ENCODE measurements at regions of chr18 and their contacts with region 1.

Region 1: GRCh38 chr18:46213295-46213694 is 109.1 kb downstream of the HAUS1 start:
- DNase-seq: no peak
- H3K4me3 Mint-ChIP-seq: no peak overlapping the region
- H3K27ac Mint-ChIP-seq: peak overlapping the region; percentile 46
- H3K4me1 Mint-ChIP-seq: peaks cover 70% of the 10 kb centered on the region
- H3K27me3 Mint-ChIP-seq: no peaks in the 10 kb centered on the region

Region 2: DNA sequence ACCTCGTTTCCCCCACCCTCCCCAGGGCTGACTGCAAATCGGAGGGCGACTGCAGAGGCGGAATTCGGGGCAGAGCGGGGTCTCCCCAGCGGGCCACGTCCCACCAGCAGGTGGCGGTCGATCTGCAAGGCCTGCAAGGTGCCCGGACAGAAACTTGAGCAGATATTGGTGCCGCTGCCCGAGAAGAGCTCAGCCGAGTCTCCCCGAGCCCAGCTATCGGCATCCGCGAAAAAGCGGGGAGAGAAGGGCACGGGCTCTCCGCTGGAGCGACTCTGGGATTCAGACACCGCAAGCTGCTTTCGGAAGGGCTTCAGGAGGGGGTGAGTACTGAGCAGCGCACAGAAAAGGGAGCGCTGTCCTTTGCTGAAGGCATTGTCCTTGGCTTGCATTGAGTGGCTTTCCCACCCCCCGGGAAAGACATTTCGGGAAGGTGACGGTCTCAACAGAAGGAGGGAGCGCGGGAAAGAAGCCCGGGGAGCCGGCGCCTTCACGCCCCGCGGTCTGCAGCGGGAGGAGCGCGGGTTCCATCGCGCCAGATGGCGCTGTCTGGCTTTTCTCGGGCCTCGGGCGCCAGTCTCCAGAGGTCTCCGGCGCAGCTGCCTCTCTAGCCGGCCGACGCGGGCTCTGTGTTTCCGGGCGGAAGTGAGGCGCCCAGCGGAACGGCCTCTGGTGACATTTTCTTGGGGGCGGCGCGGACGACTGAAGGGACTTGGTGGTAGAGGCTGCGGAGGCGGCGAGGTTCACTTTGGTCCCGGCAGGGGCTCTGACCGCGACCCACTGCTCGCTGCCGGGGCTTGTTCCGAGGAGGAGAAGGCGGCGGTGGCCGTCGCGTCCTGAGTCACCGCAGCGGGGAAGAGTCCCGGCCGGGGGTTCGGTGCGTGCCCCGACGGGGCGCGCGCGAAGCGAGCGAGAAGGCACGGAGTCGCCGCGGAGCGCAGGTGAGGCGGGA is 39.6 kb before region 1 on chr18:
- intact Hi-C with region 1: loop called (anchors 1 kb)
- DNase-seq: peak; percentile 90
- H3K4me3 Mint-ChIP-seq: peak overlapping the region; percentile 96
- H3K27ac Mint-ChIP-seq: peak overlapping the region; percentile 99
- H3K4me1 Mint-ChIP-seq: peaks cover 47% of the 10 kb centered on the region
- H3K27me3 Mint-ChIP-seq: no peaks in the 10 kb centered on the region

Region 3: GRCh38 chr18:47260120-47260923 is 1047.0 kb after region 1 on chr18:
- intact Hi-C with region 1: no loop called
- DNase-seq: no peak
- H3K4me3 Mint-ChIP-seq: no peak overlapping the region
- H3K27ac Mint-ChIP-seq: no peak overlapping the region
- H3K4me1 Mint-ChIP-seq: no peaks in the 10 kb centered on the region
- H3K27me3 Mint-ChIP-seq: peaks cover 68% of the 10 kb centered on the region